AG04450 (cell line): ENCODE measurements at regions of chr7 and their contacts with region 1.

Region 1: GRCh38 chr7:16098585-16099179 is 322.7 kb downstream of the CRPPA start:
- DNase-seq: no peak
- H3K4me3 ChIP-seq: no peak overlapping the region
- H3K27ac ChIP-seq: no peak overlapping the region
- H3K27me3 ChIP-seq: no peaks in the 10 kb centered on the region
- CTCF ChIP-seq: peak; percentile 88

Region 2: GRCh38 chr7:16078076-16078952 is 20.4 kb before region 1 on chr7:
- CTCF ChIA-PET with region 1: interaction called, 33 read pairs
- POLR2A ChIA-PET with region 1: no interaction called
- DNase-seq: peak; percentile 23
- H3K4me3 ChIP-seq: no peak overlapping the region
- H3K27ac ChIP-seq: no peak overlapping the region
- H3K27me3 ChIP-seq: no peaks in the 10 kb centered on the region
- CTCF ChIP-seq: peak; percentile 79

Region 3: DNA sequence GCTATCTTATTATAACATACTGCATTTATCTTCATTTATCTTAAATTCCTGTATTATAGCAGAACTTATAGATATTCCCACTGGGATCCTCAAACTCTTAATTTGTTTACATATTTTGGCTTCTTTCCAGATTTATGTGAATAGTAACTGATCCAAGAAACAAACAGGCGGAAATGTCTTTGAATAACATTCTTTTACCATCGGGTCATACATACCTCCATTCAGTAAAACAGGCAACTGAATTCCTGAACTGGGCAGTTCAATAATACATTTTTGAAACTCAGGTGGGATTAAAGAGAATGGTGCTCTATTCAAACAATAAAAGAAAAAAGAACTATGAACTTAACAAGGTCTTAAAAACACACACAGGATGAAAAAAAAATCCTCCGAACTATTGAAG is 14.8 kb before region 1 on chr7:
- CTCF ChIA-PET with region 1: interaction called, 33 read pairs
- POLR2A ChIA-PET with region 1: no interaction called
- DNase-seq: no peak
- H3K4me3 ChIP-seq: no peak overlapping the region
- H3K27ac ChIP-seq: no peak overlapping the region
- H3K27me3 ChIP-seq: no peaks in the 10 kb centered on the region
- CTCF ChIP-seq: no peak